ENCODE measurements at regions of chr4 and their contacts with region 1.

Region 1: DNA sequence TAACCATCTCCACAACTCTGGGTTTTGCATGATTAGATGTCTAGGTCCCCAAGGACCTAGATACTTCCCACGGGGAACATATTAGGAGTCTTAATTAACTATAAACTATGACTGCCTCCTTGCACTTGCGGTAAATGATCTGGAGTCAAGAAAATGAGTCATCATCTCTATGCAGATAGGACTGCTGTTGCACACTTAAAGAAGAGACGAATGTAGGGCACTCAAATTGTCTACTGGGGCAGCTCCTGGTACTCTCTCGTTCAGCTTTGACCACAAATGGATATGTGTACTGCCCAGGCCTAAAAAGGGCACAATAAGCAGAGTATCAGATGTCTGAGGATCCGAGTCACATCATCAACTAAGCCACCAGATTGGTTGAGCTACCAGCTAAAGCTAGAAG is 1783.4 kb upstream of the AGA start:
- DNase-seq: no peak
- H3K4me3 ChIP-seq: no peak overlapping the region
- H3K27ac ChIP-seq: no peak overlapping the region
- H3K4me1 ChIP-seq: no peaks in the 10 kb centered on the region
- H3K27me3 ChIP-seq: no peaks in the 10 kb centered on the region
- CTCF ChIP-seq: no peak
- POLR2A ChIP-seq: no peak

Region 2: GRCh38 chr4:178808106-178808505 is 417.5 kb before region 1 on chr4:
- intact Hi-C with region 1: loop called (anchors 10 kb)
- DNase-seq: no peak
- H3K4me3 ChIP-seq: no peak overlapping the region
- H3K27ac ChIP-seq: no peak overlapping the region
- H3K4me1 ChIP-seq: no peaks in the 10 kb centered on the region
- H3K27me3 ChIP-seq: no peaks in the 10 kb centered on the region
- CTCF ChIP-seq: no peak
- POLR2A ChIP-seq: no peak

Measured in esophagus squamous epithelium (tissue), 5 donors.